Dendritic cell treated with granulocyte-macrophage colony-stimulating factor and Interleukin-4, amounts not matched to agents 40 ng/mL and 50 ng/mL, for 4 days (primary cell): ENCODE measurements at regions of chr4 and their contacts with region 1.

Region 1: DNA sequence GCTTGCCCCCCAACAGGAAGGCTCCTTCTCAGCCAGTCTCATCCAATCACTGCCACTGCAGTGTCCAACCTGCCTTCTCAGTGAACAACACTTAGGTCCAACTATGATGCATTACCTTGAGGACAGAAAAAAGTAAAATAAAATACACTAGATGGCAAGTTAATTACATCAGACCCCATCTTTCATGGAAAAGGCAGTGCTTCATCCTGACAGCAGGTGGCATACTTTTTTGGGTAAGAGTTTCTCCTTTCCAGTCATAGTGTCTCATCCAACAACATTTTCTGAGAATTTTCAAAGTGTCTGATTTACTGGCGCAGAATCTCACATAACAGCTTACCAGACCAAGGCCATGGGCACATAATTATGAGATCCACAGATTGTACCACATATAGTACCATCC is 1742.8 kb downstream of the PCDH7 start:
- H3K4me3 Mint-ChIP-seq: no peak overlapping the region
- H3K27ac Mint-ChIP-seq: no peak overlapping the region
- H3K4me1 Mint-ChIP-seq: no peaks in the 10 kb centered on the region
- H3K27me3 Mint-ChIP-seq: no peaks in the 10 kb centered on the region

Region 2: GRCh38 chr4:32560306-32560705 is 97.4 kb after region 1 on chr4:
- intact Hi-C with region 1: no loop called
- H3K4me3 Mint-ChIP-seq: no peak overlapping the region
- H3K27ac Mint-ChIP-seq: no peak overlapping the region
- H3K4me1 Mint-ChIP-seq: no peaks in the 10 kb centered on the region
- H3K27me3 Mint-ChIP-seq: no peaks in the 10 kb centered on the region

Region 3: GRCh38 chr4:32775032-32775431 is 312.1 kb after region 1 on chr4:
- intact Hi-C with region 1: loop called (anchors 2 kb)
- H3K4me3 Mint-ChIP-seq: no peak overlapping the region
- H3K27ac Mint-ChIP-seq: no peak overlapping the region
- H3K4me1 Mint-ChIP-seq: no peaks in the 10 kb centered on the region
- H3K27me3 Mint-ChIP-seq: no peaks in the 10 kb centered on the region

Region 4: GRCh38 chr4:33160126-33160525 is 697.2 kb after region 1 on chr4:
- intact Hi-C with region 1: no loop called
- H3K4me3 Mint-ChIP-seq: no peak overlapping the region
- H3K27ac Mint-ChIP-seq: no peak overlapping the region
- H3K4me1 Mint-ChIP-seq: no peaks in the 10 kb centered on the region
- H3K27me3 Mint-ChIP-seq: no peaks in the 10 kb centered on the region